OCI-LY7 (cell line): ENCODE measurements at regions of chr3 and their contacts with region 1.

Region 1: GRCh38 chr3:123152687-123153086 is 49.1 kb upstream of the SEC22A start:
- DNase-seq: peak; percentile 17
- H3K4me3 ChIP-seq: no peak overlapping the region
- H3K27ac ChIP-seq: peak overlapping the region; percentile 63
- H3K4me1 ChIP-seq: peaks cover 22% of the 10 kb centered on the region
- CTCF ChIP-seq: no peak

Region 2: DNA sequence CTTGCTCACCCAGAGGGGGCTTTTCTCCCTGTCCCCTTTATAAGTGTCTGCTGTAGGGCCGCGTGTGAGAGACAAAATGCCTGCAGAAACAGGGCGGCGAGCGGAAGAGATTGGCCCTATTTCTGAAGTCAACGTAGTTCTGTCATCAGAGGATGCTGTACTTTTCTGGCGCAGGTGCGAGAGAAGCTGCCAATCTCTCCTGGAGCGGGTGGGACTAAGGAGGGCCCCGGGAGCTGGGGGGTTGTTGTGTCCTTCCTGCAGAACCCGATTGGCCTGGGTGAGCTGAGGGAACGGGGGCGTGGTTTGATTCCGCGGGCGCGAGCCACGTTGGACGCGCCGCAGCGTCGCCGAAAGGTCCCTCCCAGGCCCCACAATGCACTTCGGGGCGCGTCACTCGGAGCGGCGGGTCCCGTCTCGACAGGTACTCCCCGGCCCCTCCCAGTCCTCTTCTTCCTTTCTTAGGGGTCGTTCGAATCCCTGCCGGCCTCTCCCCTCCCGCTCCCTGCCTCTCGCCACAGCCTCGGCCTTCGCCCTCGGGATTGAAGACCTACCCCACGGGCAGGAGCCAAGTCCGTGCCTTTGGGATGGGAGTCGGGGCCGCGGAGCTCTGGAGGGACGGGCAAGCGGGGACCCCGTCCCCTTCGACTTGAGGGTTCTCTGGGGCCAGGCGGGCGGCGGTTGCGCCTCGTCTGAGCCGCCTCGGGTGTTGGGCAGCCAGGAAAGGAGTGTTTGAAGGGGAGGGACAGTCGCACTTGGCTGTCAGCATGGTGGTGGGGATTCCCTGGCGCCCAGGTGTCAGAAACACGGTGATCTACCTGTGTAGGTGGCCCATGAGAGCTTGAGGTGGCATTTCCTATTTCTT is 49.1 kb after region 1 on chr3 and contains the start of gene SEC22A:
- CTCF ChIA-PET with region 1: no interaction called
- POLR2A ChIA-PET with region 1: interaction called, 10 read pairs
- intact Hi-C with region 1: no loop called
- DNase-seq: peak; percentile 97
- H3K4me3 ChIP-seq: peak within 1 kb of the TSS; percentile 93
- H3K27ac ChIP-seq: peak within 1 kb of the TSS; percentile 72
- H3K4me1 ChIP-seq: peaks cover 21% of the 10 kb centered on the region
- CTCF ChIP-seq: no peak
- total RNA-seq, gene SEC22A: 24.5 and 26.4 TPM in 2 replicates